ENCODE measurements at regions of chr11 and their contacts with region 1.

Region 1: GRCh38 chr11:57493507-57494503 is 21.7 kb downstream of the SLC43A1 start:
- DNase-seq: peak; percentile 81
- ATAC-seq: peak; percentile 84
- H3K4me3 Mint-ChIP-seq: no peak overlapping the region
- H3K27ac Mint-ChIP-seq: peak overlapping the region; percentile 55
- H3K4me1 Mint-ChIP-seq: peaks cover 10% of the 10 kb centered on the region
- H3K27me3 Mint-ChIP-seq: no peaks in the 10 kb centered on the region

Region 2: DNA sequence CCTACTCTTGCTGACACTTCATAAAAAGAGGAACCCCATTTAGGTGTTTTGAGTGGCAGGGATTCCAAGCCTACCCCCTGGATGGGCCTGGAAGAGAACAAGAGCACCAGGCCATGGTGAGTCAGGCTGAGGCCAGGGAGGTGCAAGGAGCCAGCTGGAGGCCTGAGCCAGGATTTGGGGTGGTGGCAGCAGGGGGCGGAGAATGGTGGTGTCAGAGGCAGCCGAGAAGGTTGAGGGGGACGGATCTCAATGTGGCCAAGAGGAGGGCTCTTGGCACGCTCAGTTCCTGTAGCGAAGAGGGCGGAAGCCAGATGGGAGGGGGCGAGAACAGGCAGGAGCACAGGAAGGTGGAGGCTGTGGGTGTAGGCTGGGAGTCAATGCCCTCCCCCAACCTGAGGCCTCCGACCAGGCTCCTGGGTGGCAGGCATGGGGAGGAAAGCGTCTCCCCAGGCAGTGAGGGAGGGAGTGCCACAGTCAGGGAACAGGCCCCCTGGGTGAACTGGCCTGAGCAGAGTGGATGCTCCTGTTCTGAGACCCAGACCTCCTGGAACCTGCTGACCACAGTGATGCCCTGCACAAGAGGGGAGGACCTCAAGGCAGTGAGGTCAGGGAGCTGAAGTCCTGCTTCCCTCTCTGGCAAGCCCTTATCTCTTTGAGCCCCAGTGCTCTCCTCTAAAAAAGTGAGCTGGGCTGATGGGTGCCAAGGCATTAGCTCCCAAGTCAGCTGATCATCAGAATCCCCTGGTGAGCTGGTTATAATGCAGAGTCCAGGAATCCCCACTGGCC is 19.6 kb before region 1 on chr11:
- CTCF ChIA-PET with region 1: interaction called, 27 read pairs
- DNase-seq: peak; percentile 78
- ATAC-seq: peak; percentile 78
- H3K4me3 Mint-ChIP-seq: no peak overlapping the region
- H3K27ac Mint-ChIP-seq: peak overlapping the region; percentile 14
- H3K4me1 Mint-ChIP-seq: peaks cover 29% of the 10 kb centered on the region
- H3K27me3 Mint-ChIP-seq: peaks cover 30% of the 10 kb centered on the region

Region 3: GRCh38 chr11:57508341-57509170 is 14.8 kb after region 1 on chr11:
- CTCF ChIA-PET with region 1: interaction called, 106 read pairs
- DNase-seq: no peak
- ATAC-seq: no peak
- H3K4me3 Mint-ChIP-seq: no peak overlapping the region
- H3K27ac Mint-ChIP-seq: no peak overlapping the region
- H3K4me1 Mint-ChIP-seq: peaks cover 32% of the 10 kb centered on the region
- H3K27me3 Mint-ChIP-seq: no peaks in the 10 kb centered on the region

Region 4: GRCh38 chr11:57521116-57521515 is 27.3 kb after region 1 on chr11:
- CTCF ChIA-PET with region 1: interaction called, 247 read pairs
- DNase-seq: no peak
- ATAC-seq: no peak
- H3K4me3 Mint-ChIP-seq: no peak overlapping the region
- H3K27ac Mint-ChIP-seq: no peak overlapping the region
- H3K4me1 Mint-ChIP-seq: peaks cover 2% of the 10 kb centered on the region
- H3K27me3 Mint-ChIP-seq: no peaks in the 10 kb centered on the region

Region 5: DNA sequence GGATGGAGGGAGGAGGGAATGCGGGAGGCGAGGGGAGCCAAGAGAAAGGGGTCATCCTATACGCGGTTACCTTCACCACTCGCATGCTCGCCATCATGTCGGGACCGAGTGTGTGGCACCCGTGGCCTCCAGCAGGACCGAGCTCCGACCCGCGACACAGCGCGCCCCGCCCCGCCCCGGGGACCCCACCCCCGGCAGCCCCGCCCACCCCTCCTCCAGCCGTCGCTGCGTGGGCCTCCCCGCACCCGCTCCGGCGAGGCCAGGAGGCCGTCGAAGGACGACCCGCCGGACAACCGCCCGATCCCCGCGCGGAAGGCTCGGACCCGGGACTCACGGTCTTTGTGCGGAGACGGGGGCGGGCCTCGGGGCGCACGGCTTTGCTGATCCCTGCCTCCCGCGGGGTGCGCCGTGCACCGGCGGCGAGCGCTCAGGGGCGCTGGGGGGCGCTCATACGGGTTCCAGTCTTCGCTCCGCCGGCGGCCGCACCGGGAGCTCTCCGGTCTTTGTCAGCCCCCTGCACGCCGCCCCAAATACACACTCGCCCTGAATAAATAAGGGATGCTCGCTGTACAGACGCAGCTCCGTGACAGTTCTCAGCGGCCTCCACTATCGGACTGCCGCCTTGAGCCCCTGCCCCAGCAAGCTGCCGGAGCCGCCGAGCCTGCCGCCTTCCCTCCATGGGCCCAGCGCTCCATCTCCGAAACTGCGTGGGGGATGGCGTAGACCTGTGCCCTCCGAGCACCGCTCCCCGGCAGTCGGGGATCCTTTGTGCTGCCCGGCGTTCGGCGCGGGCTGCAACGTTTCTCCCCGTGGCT is 73.9 kb after region 1 on chr11 and contains the start of gene UBE2L6:
- CTCF ChIA-PET with region 1: interaction called, 13 read pairs
- DNase-seq: peak; percentile 77
- ATAC-seq: peak; percentile 79
- H3K4me3 Mint-ChIP-seq: peak within 1 kb of the TSS; percentile 100
- H3K27ac Mint-ChIP-seq: peak within 1 kb of the TSS; percentile 98
- H3K4me1 Mint-ChIP-seq: peaks cover 30% of the 10 kb centered on the region
- H3K27me3 Mint-ChIP-seq: no peaks in the 10 kb centered on the region
- total RNA-seq, gene UBE2L6: 245 to 317 TPM

Region 6: DNA sequence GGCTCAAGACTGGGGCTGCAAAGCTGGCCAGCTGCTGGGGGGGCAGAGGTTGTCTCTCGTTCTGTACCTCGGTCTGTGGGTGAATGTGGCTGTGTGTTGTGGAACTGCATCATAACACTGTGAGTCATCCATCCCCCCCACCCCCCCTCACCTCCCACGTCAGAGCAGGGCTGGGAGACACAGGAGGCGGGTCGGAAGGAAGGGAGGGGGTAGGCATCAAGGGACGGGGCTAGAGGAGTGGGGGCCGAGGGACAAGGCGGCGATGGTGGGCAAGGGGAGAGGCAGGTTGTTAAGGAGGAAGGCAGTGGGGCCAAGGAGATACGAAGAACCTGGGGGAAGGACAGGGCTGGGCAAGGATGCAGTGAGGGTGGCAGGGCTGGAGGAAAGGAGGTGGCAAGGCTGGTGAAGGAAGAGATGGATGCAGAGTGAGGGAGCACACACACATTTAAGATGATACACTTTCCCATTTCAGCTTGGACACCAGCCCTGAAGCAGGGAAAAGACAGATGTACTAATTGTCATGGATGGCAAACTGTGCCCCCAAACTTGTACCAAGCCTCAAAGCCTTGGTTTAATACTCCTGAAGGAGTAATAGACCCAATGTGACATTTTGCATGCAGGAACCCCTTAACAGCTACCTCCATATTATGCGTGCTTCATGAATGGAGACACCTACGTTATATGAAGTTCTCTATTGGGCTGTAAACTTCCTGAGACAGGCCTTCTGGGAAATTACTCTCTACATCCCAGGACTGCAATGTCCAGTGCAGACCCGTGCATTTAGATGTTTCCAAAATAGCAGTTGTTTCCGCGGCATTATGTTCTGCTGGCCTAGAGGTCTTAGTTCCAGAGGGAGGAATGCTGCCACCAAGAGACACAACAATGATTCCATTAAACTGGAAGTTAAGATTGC is 156.3 kb after region 1 on chr11 and contains the start of gene YPEL4:
- CTCF ChIA-PET with region 1: interaction called, 33 read pairs
- DNase-seq: peak; percentile 80
- ATAC-seq: peak; percentile 82
- H3K4me3 Mint-ChIP-seq: peak within 1 kb of the TSS; percentile 68
- H3K27ac Mint-ChIP-seq: peak within 1 kb of the TSS; percentile 44
- H3K4me1 Mint-ChIP-seq: peaks cover 55% of the 10 kb centered on the region
- H3K27me3 Mint-ChIP-seq: peaks cover 43% of the 10 kb centered on the region
- total RNA-seq, gene YPEL4: 0.42 to 1.0 TPM

Measured in activated CD8-positive, alpha-beta memory T cell treated with anti-CD3 and anti-CD28 coated beads, Interleukin-2, amount 10 ng/mL, durations not matched to agents 7 days and 5 days (primary cell).